ENCODE measurements at regions of chr9 and their contacts with region 1.

Region 1: GRCh38 chr9:5186416-5187169 is 1.2 kb upstream of the INSL6 start:
- DNase-seq: no peak
- H3K4me3 ChIP-seq: no peak overlapping the region
- H3K27ac ChIP-seq: no peak overlapping the region
- H3K4me1 ChIP-seq: no peaks in the 10 kb centered on the region
- H3K27me3 ChIP-seq: peaks cover 0 to 3% (median 0%) of the 10 kb centered on the region in 4 donors
- CTCF ChIP-seq: peak; percentile 20 to 82 (median 68)
- POLR2A ChIP-seq: no peak

Region 2: GRCh38 chr9:5305741-5306140 is 119.1 kb after region 1 on chr9:
- intact Hi-C with region 1: no loop called
- DNase-seq: no peak
- H3K4me3 ChIP-seq: no peak overlapping the region
- H3K27ac ChIP-seq: no peak overlapping the region
- H3K4me1 ChIP-seq: peaks cover 0 to 4% (median 0%) of the 10 kb centered on the region in 3 donors
- H3K27me3 ChIP-seq: peaks cover 0 to 13% (median 0%) of the 10 kb centered on the region in 4 donors
- CTCF ChIP-seq: no peak
- POLR2A ChIP-seq: no peak

Region 3: DNA sequence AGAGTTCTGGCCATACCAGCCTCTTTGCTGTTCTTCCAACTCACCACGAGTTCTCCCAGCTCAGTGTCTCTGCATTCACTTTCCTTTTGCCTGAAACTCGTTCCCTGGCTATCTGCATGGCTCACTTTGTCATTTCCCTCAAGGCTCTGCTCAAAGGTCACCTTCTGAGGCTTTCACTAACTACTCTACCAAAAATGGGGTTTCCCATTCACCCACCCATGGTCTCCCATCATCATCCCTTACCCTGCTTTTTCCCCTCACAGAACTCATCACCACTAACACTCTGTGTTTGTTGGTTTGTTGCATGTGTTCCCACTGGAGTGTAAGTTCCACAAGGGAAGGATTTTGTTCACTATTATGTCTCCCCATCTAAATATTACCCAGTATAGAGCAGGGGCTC is 234.6 kb after region 1 on chr9:
- intact Hi-C with region 1: loop called (anchors 5 kb)
- DNase-seq: no peak
- H3K4me3 ChIP-seq: no peak overlapping the region
- H3K27ac ChIP-seq: no peak overlapping the region
- H3K4me1 ChIP-seq: no peaks in the 10 kb centered on the region
- H3K27me3 ChIP-seq: no peaks in the 10 kb centered on the region
- CTCF ChIP-seq: no peak
- POLR2A ChIP-seq: no peak